PC-9 (cell line): ENCODE measurements at regions of chr16 and their contacts with region 1.

Region 1: DNA sequence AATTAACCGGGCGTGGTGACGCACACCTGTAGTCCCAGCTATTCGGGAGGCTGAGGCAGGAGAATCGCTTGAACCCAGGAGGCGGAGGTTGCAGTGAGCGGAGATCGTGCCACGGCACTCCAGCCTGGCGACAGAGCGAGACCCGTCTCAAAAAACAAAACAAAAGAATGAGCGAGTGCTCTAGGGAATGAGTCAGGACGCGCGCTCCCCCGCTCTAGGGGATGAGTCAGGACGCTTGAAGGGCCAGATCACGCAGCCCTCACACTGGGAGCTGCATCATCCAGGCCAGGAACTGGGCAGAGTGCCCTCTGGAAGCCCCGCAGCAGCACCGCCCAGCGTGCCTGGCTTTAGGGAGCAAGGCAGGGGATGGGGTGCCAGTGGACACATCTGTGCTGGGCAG is 4.0 kb upstream of the WFIKKN1 start:
- DNase-seq: peak; percentile 87 to 94
- H3K4me3 ChIP-seq: no peak overlapping the region
- H3K27ac ChIP-seq: peak overlapping the region; percentile 76
- H3K4me1 ChIP-seq: peaks cover 24% of the 10 kb centered on the region
- H3K27me3 ChIP-seq: no peaks in the 10 kb centered on the region
- CTCF ChIP-seq: no peak

Region 2: DNA sequence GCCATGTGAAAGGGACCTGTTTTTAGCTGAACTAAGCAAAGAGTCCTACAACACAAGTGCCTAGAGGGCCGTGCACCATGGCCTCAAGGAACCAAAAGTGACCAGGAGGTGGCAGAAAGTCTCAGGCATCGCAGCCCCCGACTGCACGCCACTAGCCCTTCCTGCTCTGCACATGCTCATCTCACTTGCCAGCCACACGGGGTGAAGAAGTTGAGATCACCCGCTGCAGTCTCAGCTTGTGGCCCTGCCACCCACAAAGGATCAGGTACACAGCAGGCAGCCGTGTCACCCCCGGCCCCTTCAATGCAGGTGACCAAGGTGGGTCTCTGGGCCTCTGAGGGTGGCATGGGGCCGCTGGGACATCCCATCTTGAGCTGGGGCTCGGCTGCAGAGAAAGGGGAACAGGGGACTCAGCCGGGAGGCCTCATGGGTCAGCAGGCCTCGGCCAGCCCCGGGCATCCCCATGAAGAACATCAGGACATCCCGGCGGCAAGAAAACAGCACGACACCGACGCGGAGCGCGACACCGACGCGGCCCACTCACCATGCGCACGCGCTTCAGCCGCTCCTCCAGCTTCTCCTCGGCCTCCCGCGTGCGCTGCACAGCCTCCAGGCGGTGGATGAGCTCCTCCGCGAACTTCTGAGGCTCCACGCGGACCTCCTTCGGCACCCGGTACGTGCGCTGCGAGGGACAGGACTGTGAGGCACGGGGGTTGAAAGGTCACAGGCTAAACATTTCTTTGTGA is 322.9 kb before region 1 on chr16:
- CTCF ChIA-PET with region 1: no interaction called
- POLR2A ChIA-PET with region 1: no interaction called
- intact Hi-C with region 1: no loop called
- DNase-seq: no peak
- H3K4me3 ChIP-seq: no peak overlapping the region
- H3K27ac ChIP-seq: no peak overlapping the region
- H3K4me1 ChIP-seq: no peaks in the 10 kb centered on the region
- H3K27me3 ChIP-seq: no peaks in the 10 kb centered on the region
- CTCF ChIP-seq: no peak

Region 3: DNA sequence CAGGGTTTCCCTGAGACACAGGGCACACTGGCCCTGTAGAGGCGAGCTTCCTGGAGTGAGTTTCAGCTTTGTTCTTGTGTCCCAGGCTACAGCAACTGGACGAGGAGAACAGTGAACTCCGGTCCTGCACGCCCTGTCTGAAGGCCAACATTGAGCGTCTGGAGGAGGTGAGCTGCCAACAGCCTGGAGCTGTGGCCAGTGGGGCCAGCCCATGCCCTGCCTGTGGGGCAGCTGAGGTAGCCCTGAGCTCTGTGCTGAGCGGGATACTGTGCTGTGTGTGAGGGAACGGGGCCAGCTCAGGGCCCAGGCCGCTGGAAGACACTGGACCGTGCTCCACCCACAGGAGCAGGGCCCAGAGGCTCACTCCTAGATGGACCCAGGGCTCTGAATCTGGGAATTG is 107.9 kb before region 1 on chr16:
- CTCF ChIA-PET with region 1: no interaction called
- POLR2A ChIA-PET with region 1: interaction called, 11 read pairs
- intact Hi-C with region 1: no loop called
- DNase-seq: no peak
- H3K4me3 ChIP-seq: no peak overlapping the region
- H3K27ac ChIP-seq: no peak overlapping the region
- H3K4me1 ChIP-seq: no peaks in the 10 kb centered on the region
- H3K27me3 ChIP-seq: no peaks in the 10 kb centered on the region
- CTCF ChIP-seq: no peak

Region 4: DNA sequence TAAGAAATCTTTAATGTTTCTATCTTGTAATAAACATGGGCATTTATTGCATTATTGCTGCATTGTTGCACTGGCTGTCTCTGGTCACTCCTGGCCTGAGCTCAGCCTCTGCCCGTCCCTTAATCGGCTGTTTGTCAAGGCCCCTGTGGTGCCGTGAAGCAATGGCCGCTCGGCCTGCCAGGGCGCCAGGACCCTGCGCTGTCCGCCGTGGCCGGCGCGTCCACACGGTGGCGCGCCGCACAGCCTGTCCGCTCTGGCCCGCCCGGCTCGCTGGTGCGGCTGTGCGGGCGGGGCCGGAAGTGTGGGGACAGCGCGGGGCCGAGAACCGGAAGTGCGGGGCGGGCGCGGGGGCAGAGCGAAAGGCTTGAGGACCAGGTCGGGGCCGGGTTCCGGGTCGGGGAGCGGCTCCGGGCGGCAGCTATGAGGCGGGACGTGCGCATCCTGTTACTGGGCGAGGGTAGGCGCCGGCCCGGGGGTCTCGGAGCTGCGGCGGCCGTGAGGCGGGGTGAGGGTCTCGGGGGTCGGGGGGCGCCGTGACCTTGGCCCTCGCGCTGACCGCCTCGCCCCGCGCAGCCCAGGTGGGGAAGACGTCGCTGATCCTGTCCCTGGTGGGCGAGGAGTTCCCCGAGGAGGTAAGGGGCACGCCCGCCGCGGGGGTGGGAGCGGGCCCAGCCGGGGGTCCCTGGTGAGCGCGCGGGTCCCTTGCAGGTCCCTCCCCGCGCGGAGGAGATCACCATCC is 41.2 kb after region 1 on chr16 and contains the start of gene RHOT2:
- CTCF ChIA-PET with region 1: no interaction called
- POLR2A ChIA-PET with region 1: no interaction called
- intact Hi-C with region 1: loop called (anchors 5 kb)
- DNase-seq: peak; percentile 77 to 97
- H3K4me3 ChIP-seq: peak within 1 kb of the TSS; percentile 88
- H3K27ac ChIP-seq: 0 out of 2 replicates have a peak within 1 kb of the TSS, but pooled peaks have one; percentile 16
- H3K4me1 ChIP-seq: peaks cover 9% of the 10 kb centered on the region; the same call in 1 of the 2 replicates
- H3K27me3 ChIP-seq: no peaks in the 10 kb centered on the region
- CTCF ChIP-seq: peak; percentile 72
- total RNA-seq, gene RHOT2: 143 and 173 TPM in 2 replicates